Breast epithelium (tissue), 4 donors: ENCODE measurements at regions of chr6 and their contacts with region 1.

Region 1: GRCh38 chr6:165961233-165961632 is 206.4 kb downstream of the TBXT start:
- DNase-seq: no peak
- H3K4me3 ChIP-seq: no peak overlapping the region
- H3K27ac ChIP-seq: no peak overlapping the region
- H3K4me1 ChIP-seq: no peaks in the 10 kb centered on the region
- H3K27me3 ChIP-seq: no peaks in the 10 kb centered on the region
- CTCF ChIP-seq: no peak
- POLR2A ChIP-seq: no peak

Region 2: GRCh38 chr6:165895421-165896165 is 65.6 kb before region 1 on chr6:
- intact Hi-C with region 1: loop called (anchors 2 kb)
- DNase-seq: no peak
- H3K4me3 ChIP-seq: no peak overlapping the region
- H3K27ac ChIP-seq: no peak overlapping the region
- H3K4me1 ChIP-seq: no peaks in the 10 kb centered on the region
- H3K27me3 ChIP-seq: peaks cover 0 to 4% of the 10 kb centered on the region in 2 donors
- CTCF ChIP-seq: no peak
- POLR2A ChIP-seq: no peak